Adrenal gland (tissue), 19 donors: ENCODE measurements at regions of chr3 and their contacts with region 1.

Region 1: DNA sequence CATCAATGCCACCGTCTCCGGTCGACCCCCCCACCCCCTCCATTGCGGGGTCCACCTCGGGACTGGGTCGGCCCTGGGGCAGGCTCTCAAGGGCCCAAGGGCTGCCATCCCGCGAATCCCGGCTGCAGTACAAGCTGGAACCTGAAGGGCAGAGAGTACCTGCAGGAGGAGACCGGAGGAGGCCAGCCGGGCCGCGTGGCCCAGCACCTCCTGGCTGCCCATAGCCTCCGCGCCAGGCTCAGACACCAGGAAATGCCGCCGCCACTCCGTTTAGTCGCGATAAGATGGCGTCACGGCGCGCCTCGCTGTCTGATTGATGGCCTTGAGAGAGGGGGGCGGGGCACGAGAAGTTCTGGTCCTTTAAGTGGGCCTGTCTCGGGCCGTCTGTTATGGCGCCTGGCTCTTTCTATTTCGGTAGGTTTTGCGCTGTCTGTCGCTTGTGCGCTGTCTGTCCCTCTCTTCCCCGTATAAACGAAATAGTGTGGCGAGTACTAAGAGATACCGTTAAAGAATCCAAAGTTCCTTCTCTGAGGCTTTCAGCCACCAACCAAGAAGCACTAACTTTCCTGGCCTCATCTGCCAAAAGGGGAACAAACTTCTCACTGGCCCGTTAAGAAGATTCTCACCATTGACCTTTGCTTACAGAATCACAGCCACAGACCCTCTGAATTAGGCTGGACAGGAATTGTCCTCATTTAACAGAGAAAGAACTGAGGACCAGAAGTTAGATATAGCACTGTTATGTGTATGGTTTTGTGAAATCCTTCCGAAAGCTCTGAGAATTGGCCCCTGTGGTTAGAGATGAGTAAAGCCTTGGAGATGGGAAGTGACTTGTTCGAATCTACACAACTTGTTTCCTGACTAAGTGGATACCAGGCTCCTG is at the start of gene RFT1:
- DNase-seq: peak; percentile 97 to 99 (median 99)
- H3K4me3 ChIP-seq: peak within 1 kb of the TSS; percentile 30 to 86 (median 54)
- H3K27ac ChIP-seq: peak within 1 kb of the TSS; percentile 77 to 91 (median 85)
- H3K4me1 ChIP-seq: peaks cover 13 to 40% of the 10 kb centered on the region in 2 donors
- H3K27me3 ChIP-seq: no peaks in the 10 kb centered on the region
- CTCF ChIP-seq: peak in 4 of 6 experiments; percentile 12 to 32 (median 20)
- POLR2A ChIP-seq: peak; percentile 67 to 75
- total RNA-seq, gene RFT1: 12.9 to 34.5 (median 21.9) TPM

Region 2: DNA sequence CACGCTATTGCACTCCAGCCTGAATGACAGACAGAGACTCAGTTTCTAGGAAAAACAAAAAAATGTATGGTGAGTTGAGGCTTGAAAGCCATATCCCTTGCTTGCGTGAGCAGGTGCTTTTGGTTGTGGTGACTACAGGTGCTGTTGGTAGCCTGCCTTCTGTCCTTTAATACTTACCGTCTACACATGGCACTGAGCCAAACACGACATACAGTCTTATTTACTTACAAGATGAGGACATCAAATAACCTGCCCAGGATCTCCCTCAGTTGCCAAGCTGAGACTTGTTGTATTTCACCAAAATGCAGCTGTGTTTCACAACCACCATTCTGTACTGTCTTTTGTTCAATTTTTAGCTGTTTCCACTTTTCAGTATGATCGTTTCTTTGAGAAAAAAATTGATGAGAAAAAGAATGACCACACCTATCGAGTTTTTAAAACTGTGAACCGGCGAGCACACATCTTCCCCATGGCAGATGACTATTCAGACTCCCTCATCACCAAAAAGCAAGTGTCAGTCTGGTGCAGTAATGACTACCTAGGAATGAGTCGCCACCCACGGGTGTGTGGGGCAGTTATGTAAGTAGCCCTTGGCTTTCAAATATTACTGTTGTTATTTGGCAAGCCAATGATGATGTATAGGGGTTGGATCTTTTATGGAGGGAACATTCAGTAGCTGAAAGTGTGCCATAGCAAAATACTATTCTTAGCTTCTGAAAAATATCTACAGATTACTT is 925.9 kb before region 1 on chr3:
- intact Hi-C with region 1: no loop called
- DNase-seq: peak in 1 of 7 donors; percentile 57
- H3K4me3 ChIP-seq: no peak overlapping the region
- H3K27ac ChIP-seq: peak overlapping the region in 4 of 5 donors; percentile 10 to 80 (median 57)
- H3K4me1 ChIP-seq: peaks cover 28 to 84% of the 10 kb centered on the region in 2 donors
- H3K27me3 ChIP-seq: no peaks in the 10 kb centered on the region
- CTCF ChIP-seq: no peak
- POLR2A ChIP-seq: no peak

Region 3: GRCh38 chr3:53166781-53167291 is 36.4 kb after region 1 on chr3:
- intact Hi-C with region 1: loop called in 1 of 2 experiments (anchors 5 kb)
- DNase-seq: peak in 6 of 7 donors; percentile 63 to 83 (median 76)
- H3K4me3 ChIP-seq: peak overlapping the region in 1 of 4 donors; percentile 29
- H3K27ac ChIP-seq: peak overlapping the region in 4 of 5 donors; percentile 49 to 90 (median 74)
- H3K4me1 ChIP-seq: peaks cover 43 to 76% of the 10 kb centered on the region in 2 donors
- H3K27me3 ChIP-seq: no peaks in the 10 kb centered on the region
- CTCF ChIP-seq: no peak
- POLR2A ChIP-seq: no peak

Region 4: GRCh38 chr3:53195602-53196574 is 65.5 kb after region 1 on chr3:
- intact Hi-C with region 1: loop called (anchors 5 kb)
- DNase-seq: peak in 6 of 7 donors; percentile 47 to 66 (median 55)
- H3K4me3 ChIP-seq: no peak overlapping the region
- H3K27ac ChIP-seq: no peak overlapping the region
- H3K4me1 ChIP-seq: peaks cover 0 to 21% of the 10 kb centered on the region in 2 donors
- H3K27me3 ChIP-seq: no peaks in the 10 kb centered on the region
- CTCF ChIP-seq: peak; percentile 91 to 100 (median 97)
- POLR2A ChIP-seq: no peak

Region 5: GRCh38 chr3:54198556-54198955 is 1068.1 kb after region 1 on chr3:
- intact Hi-C with region 1: no loop called
- DNase-seq: no peak
- H3K4me3 ChIP-seq: no peak overlapping the region
- H3K27ac ChIP-seq: no peak overlapping the region
- H3K4me1 ChIP-seq: no peaks in the 10 kb centered on the region
- H3K27me3 ChIP-seq: no peaks in the 10 kb centered on the region
- CTCF ChIP-seq: no peak
- POLR2A ChIP-seq: no peak